Activated CD4-positive, alpha-beta T cell treated with anti-CD3 and anti-CD28 coated beads for 36 hours (primary cell): ENCODE measurements at regions of chr12 and their contacts with region 1.

Region 1: DNA sequence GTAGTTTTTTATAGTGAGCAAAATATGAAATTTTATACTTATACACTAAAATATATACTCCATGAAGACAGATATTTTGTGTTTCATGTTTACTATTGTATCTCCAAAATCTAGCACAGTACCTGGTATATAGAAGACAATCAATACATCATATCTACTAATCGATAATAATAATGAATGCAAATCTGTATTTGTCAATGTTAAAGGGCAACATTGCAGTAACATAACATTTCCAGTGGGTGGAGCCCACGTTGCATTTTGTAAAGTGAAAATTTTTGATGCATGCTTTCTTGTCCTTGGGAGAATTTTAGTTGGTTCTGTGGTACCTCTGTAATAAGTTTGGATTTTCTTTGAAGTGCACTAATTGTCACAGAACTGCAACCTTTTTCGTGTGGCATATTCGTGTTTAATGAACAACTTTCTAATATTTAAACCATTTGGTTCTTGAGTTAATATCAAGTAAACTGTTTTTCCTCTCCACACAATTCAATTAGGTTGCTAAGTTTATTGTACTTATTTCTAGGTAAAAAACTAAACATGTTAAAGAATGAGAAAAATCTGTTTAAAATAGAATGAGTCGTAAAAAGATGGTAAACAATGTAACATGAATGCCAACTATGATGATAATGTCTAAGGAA is 47.4 kb downstream of the AVPR1A start:
- DNase-seq: peak; percentile 25
- ATAC-seq: no peak
- H3K4me3 Mint-ChIP-seq: no peak overlapping the region
- H3K27ac Mint-ChIP-seq: no peak overlapping the region
- H3K4me1 Mint-ChIP-seq: no peaks in the 10 kb centered on the region
- H3K27me3 Mint-ChIP-seq: peaks cover 4% of the 10 kb centered on the region

Region 2: GRCh38 chr12:62866451-62867082 is 237.0 kb before region 1 on chr12:
- CTCF ChIA-PET with region 1: no interaction called
- POLR2A ChIA-PET with region 1: no interaction called
- intact Hi-C with region 1: no loop called
- DNase-seq: no peak
- ATAC-seq: no peak
- H3K4me3 Mint-ChIP-seq: no peak overlapping the region
- H3K27ac Mint-ChIP-seq: no peak overlapping the region
- H3K4me1 Mint-ChIP-seq: no peaks in the 10 kb centered on the region
- H3K27me3 Mint-ChIP-seq: peaks cover 15% of the 10 kb centered on the region

Region 3: DNA sequence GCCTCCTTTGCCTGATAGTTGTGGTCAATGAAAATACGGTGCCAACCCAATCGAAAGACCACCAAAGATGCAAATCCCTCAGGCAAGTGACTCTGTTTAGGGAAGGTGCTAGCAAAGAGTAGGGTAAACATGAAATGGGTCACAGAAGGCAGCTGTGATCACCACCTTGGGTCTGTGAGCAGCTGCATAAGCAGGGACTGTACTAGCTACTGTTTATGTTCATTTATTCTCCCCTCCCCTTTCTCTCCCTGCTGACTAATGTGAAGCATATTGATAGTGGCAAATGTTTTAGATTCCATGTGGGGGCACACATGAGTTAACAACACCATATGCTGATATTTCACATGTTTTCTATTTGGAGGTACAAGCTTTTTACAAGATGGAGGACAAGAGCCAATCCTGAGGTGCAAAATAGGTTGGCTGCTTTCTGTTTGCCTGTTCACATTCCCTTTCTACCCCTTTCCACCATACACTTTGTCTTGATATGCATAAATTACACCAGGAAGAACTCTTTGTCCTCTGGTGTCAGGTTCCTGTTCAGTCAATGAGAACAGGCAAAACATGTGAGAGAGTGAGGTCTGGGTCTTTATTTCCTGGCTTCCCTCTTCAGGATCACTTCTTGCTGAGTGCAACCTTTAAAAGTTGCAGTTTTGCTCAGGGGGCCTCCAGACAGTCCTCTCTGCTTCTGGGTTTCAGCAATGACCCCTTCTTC is 23.7 kb before region 1 on chr12:
- CTCF ChIA-PET with region 1: no interaction called
- POLR2A ChIA-PET with region 1: no interaction called
- intact Hi-C with region 1: no loop called
- DNase-seq: no peak
- ATAC-seq: no peak
- H3K4me3 Mint-ChIP-seq: no peak overlapping the region
- H3K27ac Mint-ChIP-seq: no peak overlapping the region
- H3K4me1 Mint-ChIP-seq: no peaks in the 10 kb centered on the region
- H3K27me3 Mint-ChIP-seq: no peaks in the 10 kb centered on the region

Region 4: DNA sequence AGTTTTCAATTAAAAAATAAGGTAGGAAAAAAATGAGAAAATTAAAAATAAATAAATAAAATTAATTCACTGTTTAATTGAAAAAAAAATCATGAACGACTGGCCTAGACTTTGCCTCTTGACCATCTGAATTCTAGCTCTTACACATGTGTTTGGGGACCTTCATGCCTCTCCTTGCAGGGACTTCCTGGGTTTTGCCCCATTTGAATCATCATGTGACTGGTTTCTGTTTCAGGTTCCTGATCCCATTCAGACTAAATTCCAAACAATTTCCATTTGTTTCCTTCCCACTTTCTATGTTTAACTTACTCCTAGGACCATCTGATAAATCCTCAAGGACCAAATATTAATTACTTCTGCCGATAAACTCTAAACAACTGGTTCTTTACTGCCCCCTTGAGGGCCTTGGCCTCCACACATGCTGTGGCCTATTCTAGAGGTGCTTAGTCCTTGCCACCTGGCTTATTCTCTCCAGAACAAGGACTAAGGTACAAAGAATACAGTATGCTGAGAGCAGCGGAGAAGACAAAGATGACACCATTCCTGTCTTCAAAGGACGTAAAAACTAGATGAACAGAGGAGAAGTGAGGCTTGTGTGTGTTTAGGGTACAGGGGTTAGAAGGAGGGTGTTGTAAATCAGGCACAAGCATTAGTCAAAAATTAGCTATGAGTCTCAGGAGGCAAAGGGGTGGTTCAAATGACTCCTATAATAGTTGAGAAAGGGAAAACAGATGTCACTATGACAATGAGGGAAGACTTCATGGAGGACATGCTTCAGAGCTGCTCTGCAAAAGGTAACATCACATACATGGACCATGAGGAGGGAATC is 173.1 kb after region 1 on chr12:
- CTCF ChIA-PET with region 1: no interaction called
- POLR2A ChIA-PET with region 1: no interaction called
- intact Hi-C with region 1: loop called in 1 of 2 experiments (anchors 1 kb)
- DNase-seq: peak; percentile 38
- ATAC-seq: no peak
- H3K4me3 Mint-ChIP-seq: no peak overlapping the region
- H3K27ac Mint-ChIP-seq: no peak overlapping the region
- H3K4me1 Mint-ChIP-seq: no peaks in the 10 kb centered on the region
- H3K27me3 Mint-ChIP-seq: no peaks in the 10 kb centered on the region

Region 5: DNA sequence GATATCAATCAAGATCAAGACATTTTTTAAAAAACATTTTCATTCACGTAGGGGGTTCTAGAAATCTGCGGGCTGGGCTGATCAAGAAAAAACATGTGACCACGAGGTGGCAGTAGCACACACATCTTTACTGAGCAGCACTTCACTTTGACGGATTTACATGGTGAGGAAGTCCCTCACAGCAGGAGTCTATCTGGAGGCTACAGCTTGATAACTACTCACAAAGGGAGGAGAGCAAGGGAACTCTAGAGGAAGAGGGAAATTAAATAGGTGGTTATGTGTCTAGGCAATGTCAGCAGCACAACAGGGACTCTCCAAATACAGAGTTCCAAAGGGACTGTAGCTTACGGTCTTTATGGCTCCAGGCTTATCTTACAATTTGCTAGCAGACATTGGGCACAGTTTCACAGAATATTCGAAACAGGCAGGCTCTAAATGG is 316.6 kb after region 1 on chr12:
- CTCF ChIA-PET with region 1: no interaction called
- POLR2A ChIA-PET with region 1: no interaction called
- intact Hi-C with region 1: loop called in 1 of 2 experiments (anchors 10 kb)
- DNase-seq: peak; percentile 67
- ATAC-seq: peak; percentile 49
- H3K4me3 Mint-ChIP-seq: no peak overlapping the region
- H3K27ac Mint-ChIP-seq: no peak overlapping the region
- H3K4me1 Mint-ChIP-seq: no peaks in the 10 kb centered on the region
- H3K27me3 Mint-ChIP-seq: peaks cover 1% of the 10 kb centered on the region